HepG2 (cell line): ENCODE measurements at regions of chr10 and their contacts with region 1.

Region 1: DNA sequence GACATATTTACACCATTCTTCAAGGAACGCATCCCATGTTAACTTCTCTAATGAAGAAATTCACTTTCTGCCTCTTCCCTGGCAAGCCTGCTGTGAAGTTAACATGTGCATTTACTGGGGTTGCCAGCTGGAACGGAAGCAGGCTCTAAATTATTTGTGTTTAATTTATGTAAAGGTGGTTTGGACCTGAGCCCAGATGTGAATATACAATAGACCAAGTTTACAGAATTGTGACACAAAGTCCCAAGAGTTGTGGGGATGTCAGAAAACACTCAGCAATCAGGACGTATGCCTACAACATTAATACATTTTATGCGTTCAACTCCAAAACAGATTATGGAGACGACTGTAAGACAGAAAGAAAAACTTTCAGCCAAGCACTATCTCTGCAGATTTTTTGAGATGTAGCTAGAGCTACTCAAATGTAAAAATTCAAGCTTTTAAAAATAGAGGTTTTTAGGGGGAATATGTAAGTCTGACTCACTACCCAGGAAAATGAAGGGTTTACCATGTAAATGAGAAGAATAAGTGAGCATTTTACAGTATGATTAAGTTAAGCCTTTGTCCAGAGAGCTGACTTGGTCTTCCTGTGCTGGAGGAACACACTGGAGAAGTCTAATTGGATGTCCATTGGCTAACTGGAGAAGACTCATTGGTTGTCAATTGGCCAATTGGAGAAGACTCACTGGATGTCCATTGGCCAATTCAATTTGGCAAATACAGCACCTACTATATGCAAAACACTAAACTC is 19.5 kb downstream of the NRP1 start:
- DNase-seq: no peak
- ATAC-seq: no peak
- H3K4me3 ChIP-seq: no peak overlapping the region
- H3K27ac ChIP-seq: no peak overlapping the region
- H3K4me1 ChIP-seq: peaks cover 19% of the 10 kb centered on the region
- H3K27me3 ChIP-seq: no peaks in the 10 kb centered on the region
- CTCF ChIP-seq: no peak
- EP300 ChIP-seq: no peak
- POLR2A ChIP-seq: no peak
- RAD21 ChIP-seq: no peak

Region 2: DNA sequence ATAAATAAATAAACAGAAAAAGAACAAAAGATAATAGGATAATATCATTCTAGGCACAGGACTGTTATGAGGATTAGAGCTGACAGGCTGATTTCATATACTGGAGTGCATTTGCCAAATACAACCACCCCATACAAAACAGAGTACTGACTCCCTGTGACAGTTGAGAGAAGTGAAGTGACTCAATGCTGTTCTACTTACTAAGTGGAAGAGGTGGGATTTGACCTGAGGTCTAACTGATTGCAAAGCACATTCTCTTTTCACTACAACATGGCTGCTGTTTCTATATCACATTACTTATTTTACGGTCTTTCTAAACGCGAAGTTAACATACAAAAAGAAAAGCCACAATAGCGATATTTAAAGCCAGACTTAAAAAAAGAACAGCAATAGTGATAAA is 408.4 kb before region 1 on chr10:
- CTCF ChIA-PET with region 1: no interaction called
- POLR2A ChIA-PET with region 1: no interaction called
- in situ Hi-C with region 1: no loop called
- intact Hi-C with region 1: no loop called
- DNase-seq: no peak
- ATAC-seq: no peak
- H3K4me3 ChIP-seq: no peak overlapping the region
- H3K27ac ChIP-seq: no peak overlapping the region
- H3K4me1 ChIP-seq: 0 out of 2 replicates have a peak, but pooled peaks cover 7% of the 10 kb centered on the region
- H3K27me3 ChIP-seq: no peaks in the 10 kb centered on the region
- CTCF ChIP-seq: no peak
- EP300 ChIP-seq: no peak
- POLR2A ChIP-seq: no peak
- RAD21 ChIP-seq: no peak

Region 3: DNA sequence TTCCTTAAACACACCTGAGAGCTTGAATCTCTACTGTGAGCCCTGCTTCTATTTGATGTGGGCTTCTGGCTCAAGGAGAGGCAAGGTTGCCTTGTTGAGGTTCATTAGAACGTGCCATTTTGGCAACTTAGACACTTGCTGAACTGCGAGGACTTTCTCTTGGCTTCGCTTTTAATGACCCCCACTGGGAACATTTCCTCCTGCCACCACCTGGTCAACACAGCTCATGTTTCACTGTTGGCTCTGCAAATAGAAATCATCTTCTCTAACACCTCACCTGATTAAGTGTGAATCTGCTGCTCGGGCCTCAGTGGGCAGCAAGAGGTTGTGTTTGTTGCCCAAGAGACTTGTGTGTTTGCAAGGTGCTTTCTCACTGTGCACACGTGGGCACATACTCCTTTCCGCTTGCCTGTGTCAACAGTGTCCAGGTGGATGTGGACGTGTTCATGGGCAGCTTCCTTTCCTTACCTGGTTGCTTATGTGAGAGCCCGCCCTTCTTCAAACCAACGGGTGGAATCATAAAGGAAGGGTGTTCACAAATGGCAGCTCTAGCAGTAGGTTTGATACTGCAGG is 127.5 kb before region 1 on chr10:
- CTCF ChIA-PET with region 1: no interaction called
- POLR2A ChIA-PET with region 1: no interaction called
- in situ Hi-C with region 1: loop called (anchors 5 kb)
- intact Hi-C with region 1: no loop called
- DNase-seq: no peak
- ATAC-seq: no peak
- H3K4me3 ChIP-seq: no peak overlapping the region
- H3K27ac ChIP-seq: no peak overlapping the region
- H3K4me1 ChIP-seq: no peaks in the 10 kb centered on the region
- H3K27me3 ChIP-seq: no peaks in the 10 kb centered on the region
- CTCF ChIP-seq: no peak
- EP300 ChIP-seq: no peak
- POLR2A ChIP-seq: no peak
- RAD21 ChIP-seq: no peak

Region 4: DNA sequence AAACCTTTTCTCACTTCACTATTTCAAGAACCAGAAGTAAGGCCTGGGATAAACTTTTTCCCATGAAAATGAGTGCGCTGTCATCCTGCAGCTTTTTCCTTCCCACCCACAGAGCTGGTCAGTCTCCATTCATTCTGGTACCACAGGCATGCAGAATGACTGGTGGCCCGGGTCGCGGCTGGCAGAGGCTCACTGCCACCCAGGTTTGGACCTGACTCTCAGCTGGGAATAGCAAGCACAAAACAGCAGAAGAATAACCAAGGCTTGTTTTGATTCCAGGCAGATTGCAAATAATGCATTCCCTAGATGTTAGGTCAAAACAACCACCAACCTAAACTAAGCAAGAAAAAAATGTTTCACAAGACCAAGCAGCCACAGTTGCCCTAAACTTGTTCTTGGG is 210.0 kb after region 1 on chr10:
- CTCF ChIA-PET with region 1: no interaction called
- POLR2A ChIA-PET with region 1: no interaction called
- in situ Hi-C with region 1: no loop called
- intact Hi-C with region 1: no loop called
- DNase-seq: no peak
- ATAC-seq: no peak
- H3K4me3 ChIP-seq: no peak overlapping the region
- H3K27ac ChIP-seq: no peak overlapping the region
- H3K4me1 ChIP-seq: no peaks in the 10 kb centered on the region
- H3K27me3 ChIP-seq: no peaks in the 10 kb centered on the region
- CTCF ChIP-seq: no peak
- EP300 ChIP-seq: no peak
- POLR2A ChIP-seq: no peak
- RAD21 ChIP-seq: no peak